ENCODE measurements at regions of chr5 and their contacts with region 1.

Region 1: DNA sequence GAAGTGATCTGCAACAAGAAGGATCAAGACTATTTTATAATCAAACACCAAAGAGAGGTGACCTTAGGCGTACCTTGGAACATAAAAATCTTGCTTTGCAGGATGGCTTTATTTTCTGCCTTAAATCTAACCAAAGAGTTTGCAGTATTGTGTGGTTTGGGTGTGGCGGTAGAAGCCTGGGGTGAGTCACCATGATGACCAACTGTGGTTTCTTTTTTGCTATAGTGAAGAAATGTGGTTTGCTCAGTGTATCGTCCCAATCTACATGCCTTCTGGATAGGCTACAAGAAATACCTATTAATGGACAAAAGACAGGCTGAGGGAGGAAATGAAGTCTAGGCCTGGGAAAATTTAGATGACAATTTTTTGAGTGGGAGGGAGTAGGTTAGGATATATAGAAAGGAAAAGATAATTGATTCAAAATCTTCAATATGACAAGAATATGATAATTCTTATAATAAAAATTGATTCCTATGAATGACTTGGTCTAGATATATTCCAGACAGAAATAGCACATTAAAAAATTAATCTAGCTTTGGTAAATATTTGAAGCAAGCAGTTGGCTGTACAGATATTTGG is 5.0 kb upstream of the CAST start:
- DNase-seq: no peak
- H3K4me3 ChIP-seq: no peak overlapping the region
- H3K27ac ChIP-seq: no peak overlapping the region
- H3K4me1 ChIP-seq: no peaks in the 10 kb centered on the region
- H3K27me3 ChIP-seq: no peaks in the 10 kb centered on the region
- CTCF ChIP-seq: no peak
- POLR2A ChIP-seq: no peak

Region 2: DNA sequence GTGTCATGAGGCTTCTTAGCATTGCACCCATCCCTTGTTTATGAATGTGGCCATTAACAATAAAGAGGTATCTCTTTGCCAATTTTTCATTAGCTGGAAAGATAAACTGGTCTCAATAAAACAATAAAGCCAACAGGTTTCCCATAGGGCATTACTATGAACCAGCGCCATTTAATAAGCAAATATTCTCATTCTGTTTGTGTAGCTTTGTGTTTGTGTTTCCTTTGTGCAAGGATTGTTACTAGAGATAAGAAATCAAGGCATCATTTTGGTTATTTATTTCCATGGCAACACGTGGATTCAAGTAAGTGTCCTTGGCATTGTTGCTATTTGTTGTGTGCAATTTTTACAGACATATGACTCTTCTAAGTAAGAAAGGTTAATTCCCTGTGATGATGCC is 32.5 kb before region 1 on chr5:
- intact Hi-C with region 1: loop called (anchors 5 kb)
- DNase-seq: no peak
- H3K4me3 ChIP-seq: no peak overlapping the region
- H3K27ac ChIP-seq: no peak overlapping the region
- H3K4me1 ChIP-seq: peaks cover 2% of the 10 kb centered on the region
- H3K27me3 ChIP-seq: no peaks in the 10 kb centered on the region
- CTCF ChIP-seq: no peak
- POLR2A ChIP-seq: no peak

Region 3: DNA sequence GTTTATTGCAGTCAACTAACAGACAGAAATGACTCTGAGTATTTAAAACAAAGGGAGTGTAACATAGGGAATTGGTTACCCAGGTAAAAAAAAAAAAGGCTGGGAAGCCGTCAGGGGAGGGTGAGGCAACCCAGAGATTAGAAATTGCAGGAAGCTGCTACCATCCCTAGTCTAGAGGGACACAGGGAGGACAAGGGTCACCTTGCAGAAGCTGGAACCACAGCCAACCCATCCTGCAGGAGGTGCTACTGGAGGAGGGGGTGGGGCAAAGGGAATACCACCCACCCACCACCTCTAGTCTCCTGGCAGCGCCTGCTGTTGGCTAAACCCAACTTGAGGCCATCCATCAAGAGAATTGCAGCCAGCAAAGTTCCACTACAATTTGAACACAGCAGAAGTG is 11.5 kb after region 1 on chr5:
- intact Hi-C with region 1: no loop called
- DNase-seq: no peak
- H3K4me3 ChIP-seq: no peak overlapping the region
- H3K27ac ChIP-seq: no peak overlapping the region
- H3K4me1 ChIP-seq: peaks cover 5% of the 10 kb centered on the region
- H3K27me3 ChIP-seq: no peaks in the 10 kb centered on the region
- CTCF ChIP-seq: no peak
- POLR2A ChIP-seq: no peak